Left ventricle myocardium inferior (tissue), 1 donor: ENCODE measurements at regions of chr3 and their contacts with region 1.

Region 1: DNA sequence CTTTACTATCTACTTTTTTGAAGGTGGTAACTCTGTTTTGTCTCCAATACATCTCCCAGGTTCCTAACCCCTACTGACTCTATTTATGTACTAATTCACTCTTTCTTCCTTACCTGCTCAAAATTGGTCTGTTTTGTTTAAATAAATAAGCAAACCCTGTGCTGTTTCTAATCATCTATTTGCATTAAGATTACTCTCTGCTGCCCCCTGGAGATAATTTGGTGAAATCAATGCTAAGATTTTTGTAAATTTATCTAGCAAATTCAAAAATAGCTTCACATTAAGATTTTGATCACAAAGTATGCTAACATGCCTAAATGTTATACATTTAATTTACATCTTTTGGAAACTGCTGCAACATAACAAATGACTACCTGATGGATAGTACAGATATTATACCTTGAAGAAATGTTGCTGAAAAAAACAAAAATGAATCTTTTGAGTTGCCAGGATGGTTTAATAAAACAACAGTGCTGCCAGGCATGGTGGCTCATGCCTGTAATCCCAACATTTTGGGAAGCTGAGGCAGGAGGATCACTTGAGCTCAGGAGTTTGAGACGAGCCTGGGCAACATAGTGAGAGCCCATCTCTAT is 4.4 kb upstream of the CD200R1 start:
- DNase-seq: no peak
- H3K4me3 ChIP-seq: no peak overlapping the region
- H3K27ac ChIP-seq: no peak overlapping the region
- H3K4me1 ChIP-seq: no peaks in the 10 kb centered on the region
- H3K27me3 ChIP-seq: peaks cover 4% of the 10 kb centered on the region
- CTCF ChIP-seq: peak; percentile 79

Region 2: DNA sequence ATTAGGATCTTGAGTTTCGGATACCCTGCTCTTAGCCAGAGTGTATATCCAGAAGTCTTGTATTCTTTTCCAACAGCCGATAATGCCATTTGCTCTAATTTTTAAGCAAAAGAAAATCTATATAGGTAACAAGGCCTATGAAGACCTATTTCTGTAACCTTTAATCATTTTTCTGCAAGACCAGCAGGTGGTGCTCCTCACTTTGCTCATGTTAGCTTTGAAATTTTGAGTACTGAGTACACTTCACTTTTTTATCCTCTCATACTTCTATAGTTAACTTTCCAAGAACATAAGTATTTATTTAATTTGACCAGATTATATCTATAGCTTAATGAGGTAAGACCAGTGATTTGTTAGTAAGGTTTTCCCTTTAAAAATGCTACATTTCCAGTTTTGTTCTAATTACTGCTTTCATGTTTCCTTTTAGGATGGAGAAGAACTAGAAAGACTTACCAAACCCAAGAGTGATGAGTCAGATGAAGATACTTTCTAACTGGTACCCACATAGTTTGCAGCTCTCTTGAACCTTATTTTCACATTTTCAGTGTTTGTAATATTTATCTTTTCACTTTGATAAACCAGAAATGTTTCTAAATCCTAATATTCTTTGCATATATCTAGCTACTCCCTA is 397.0 kb before region 1 on chr3:
- intact Hi-C with region 1: loop called (anchors 10 kb)
- DNase-seq: no peak
- H3K4me3 ChIP-seq: no peak overlapping the region
- H3K27ac ChIP-seq: no peak overlapping the region
- H3K4me1 ChIP-seq: peaks cover 4% of the 10 kb centered on the region
- H3K27me3 ChIP-seq: no peaks in the 10 kb centered on the region
- CTCF ChIP-seq: peak; percentile 66

Region 3: GRCh38 chr3:112642912-112643506 is 336.3 kb before region 1 on chr3:
- intact Hi-C with region 1: loop called (anchors 5 kb)
- DNase-seq: peak; percentile 80
- H3K4me3 ChIP-seq: peak overlapping the region; percentile 39
- H3K27ac ChIP-seq: peak overlapping the region; percentile 82
- H3K4me1 ChIP-seq: peaks cover 29% of the 10 kb centered on the region
- H3K27me3 ChIP-seq: peaks cover 62% of the 10 kb centered on the region
- CTCF ChIP-seq: peak; percentile 83

Region 4: GRCh38 chr3:112670824-112671223 is 308.5 kb before region 1 on chr3:
- intact Hi-C with region 1: no loop called
- DNase-seq: no peak
- H3K4me3 ChIP-seq: no peak overlapping the region
- H3K27ac ChIP-seq: no peak overlapping the region
- H3K4me1 ChIP-seq: no peaks in the 10 kb centered on the region
- H3K27me3 ChIP-seq: peaks cover 13% of the 10 kb centered on the region
- CTCF ChIP-seq: no peak

Region 5: DNA sequence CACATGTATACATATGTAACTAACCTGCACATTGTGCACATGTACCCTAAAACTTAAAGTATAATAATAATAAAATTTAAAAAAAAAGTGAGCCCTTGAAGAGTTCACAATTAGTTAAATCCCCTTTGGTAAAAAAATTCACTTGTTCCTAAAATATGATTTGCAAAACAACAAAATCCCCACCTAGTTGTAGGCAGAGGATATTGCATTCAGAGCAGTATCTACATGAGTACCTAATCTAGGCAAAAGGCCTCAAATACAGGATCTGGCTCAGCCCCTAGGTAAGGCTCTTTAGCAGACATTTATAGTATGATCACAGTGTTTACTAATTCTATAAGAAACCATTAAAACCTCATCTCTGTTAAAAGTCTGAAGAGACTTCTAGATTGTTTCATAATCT is 249.1 kb before region 1 on chr3:
- intact Hi-C with region 1: no loop called
- DNase-seq: no peak
- H3K4me3 ChIP-seq: no peak overlapping the region
- H3K27ac ChIP-seq: no peak overlapping the region
- H3K4me1 ChIP-seq: no peaks in the 10 kb centered on the region
- H3K27me3 ChIP-seq: no peaks in the 10 kb centered on the region
- CTCF ChIP-seq: no peak